ENCODE measurements at regions of chr7 and their contacts with region 1.

Region 1: GRCh38 chr7:124723012-124723411 is 42.6 kb downstream of the GPR37 start:
- DNase-seq: peak; percentile 27
- H3K4me3 ChIP-seq: no peak overlapping the region
- H3K27ac ChIP-seq: no peak overlapping the region
- H3K4me1 ChIP-seq: no peaks in the 10 kb centered on the region
- H3K27me3 ChIP-seq: no peaks in the 10 kb centered on the region
- CTCF ChIP-seq: no peak

Region 2: DNA sequence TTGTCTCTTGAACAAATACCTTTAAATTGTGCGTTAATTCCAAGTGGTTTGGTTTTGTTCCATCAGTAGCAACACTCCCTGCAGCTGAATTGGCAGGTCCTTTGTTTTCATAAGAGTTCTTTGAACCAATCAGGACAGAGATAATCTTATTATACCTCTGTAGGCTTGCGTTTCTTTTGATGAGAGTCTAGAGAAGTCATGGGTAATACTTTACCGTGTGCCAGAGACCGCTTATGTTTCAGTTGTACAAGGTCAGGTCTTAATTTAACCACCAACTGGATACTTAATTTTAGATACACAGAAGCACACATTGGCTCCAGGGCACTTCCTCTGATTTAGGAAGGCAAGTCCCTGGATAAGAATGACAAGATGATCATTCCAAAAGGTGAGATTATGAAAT is 1121.5 kb before region 1 on chr7 and contains the start of gene ASB15:
- CTCF ChIA-PET with region 1: no interaction called
- POLR2A ChIA-PET with region 1: interaction called, 10 read pairs
- intact Hi-C with region 1: no loop called
- DNase-seq: no peak
- H3K4me3 ChIP-seq: no peak within 1 kb of the TSS
- H3K27ac ChIP-seq: no peak within 1 kb of the TSS
- H3K4me1 ChIP-seq: no peaks in the 10 kb centered on the region
- H3K27me3 ChIP-seq: no peaks in the 10 kb centered on the region
- CTCF ChIP-seq: no peak
- total RNA-seq, gene ASB15: not detected in 2 replicates

Region 3: DNA sequence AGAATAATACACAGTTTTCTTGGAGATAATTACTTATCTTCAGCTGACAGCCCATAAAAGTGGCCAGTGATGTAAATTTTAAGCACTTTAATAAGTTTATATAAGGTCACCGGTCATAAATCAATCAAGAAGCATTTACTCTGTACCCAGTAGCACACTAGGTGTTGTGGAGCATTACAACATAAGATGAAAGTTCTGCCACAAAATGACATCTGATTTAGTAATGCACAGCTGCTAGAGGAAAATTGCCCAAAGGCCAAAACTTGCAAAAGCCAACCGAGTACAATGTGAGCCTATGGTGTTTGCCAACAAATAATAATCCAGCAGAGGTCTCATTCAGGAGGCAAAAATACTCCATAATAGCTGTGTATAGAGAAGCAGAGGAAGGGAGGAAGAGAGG is 21.1 kb before region 1 on chr7:
- CTCF ChIA-PET with region 1: no interaction called
- POLR2A ChIA-PET with region 1: no interaction called
- intact Hi-C with region 1: no loop called
- DNase-seq: peak; percentile 8
- H3K4me3 ChIP-seq: no peak overlapping the region
- H3K27ac ChIP-seq: no peak overlapping the region
- H3K4me1 ChIP-seq: no peaks in the 10 kb centered on the region
- H3K27me3 ChIP-seq: no peaks in the 10 kb centered on the region
- CTCF ChIP-seq: no peak

Region 4: GRCh38 chr7:124840435-124840834 is 117.4 kb after region 1 on chr7:
- CTCF ChIA-PET with region 1: no interaction called
- POLR2A ChIA-PET with region 1: no interaction called
- intact Hi-C with region 1: no loop called
- DNase-seq: peak; percentile 23
- H3K4me3 ChIP-seq: no peak overlapping the region
- H3K27ac ChIP-seq: no peak overlapping the region
- H3K4me1 ChIP-seq: no peaks in the 10 kb centered on the region
- H3K27me3 ChIP-seq: no peaks in the 10 kb centered on the region
- CTCF ChIP-seq: peak; percentile 42; the same call in 1 of the 2 replicates

Measured in A673 (cell line).